Activated CD8-positive, alpha-beta T cell treated with anti-CD3 and anti-CD28 coated beads for 36 hours (primary cell): ENCODE measurements at regions of chr20 and their contacts with region 1.

Region 1: GRCh38 chr20:49484180-49485140 is 2.0 kb upstream of the KCNB1 start:
- DNase-seq: peak; percentile 79
- ATAC-seq: peak; percentile 88
- H3K4me3 Mint-ChIP-seq: peak overlapping the region; percentile 71
- H3K27ac Mint-ChIP-seq: no peak overlapping the region
- H3K4me1 Mint-ChIP-seq: peaks cover 5% of the 10 kb centered on the region
- H3K27me3 Mint-ChIP-seq: peaks cover 63% of the 10 kb centered on the region
- CTCF ChIP-seq: peak; percentile 77

Region 2: DNA sequence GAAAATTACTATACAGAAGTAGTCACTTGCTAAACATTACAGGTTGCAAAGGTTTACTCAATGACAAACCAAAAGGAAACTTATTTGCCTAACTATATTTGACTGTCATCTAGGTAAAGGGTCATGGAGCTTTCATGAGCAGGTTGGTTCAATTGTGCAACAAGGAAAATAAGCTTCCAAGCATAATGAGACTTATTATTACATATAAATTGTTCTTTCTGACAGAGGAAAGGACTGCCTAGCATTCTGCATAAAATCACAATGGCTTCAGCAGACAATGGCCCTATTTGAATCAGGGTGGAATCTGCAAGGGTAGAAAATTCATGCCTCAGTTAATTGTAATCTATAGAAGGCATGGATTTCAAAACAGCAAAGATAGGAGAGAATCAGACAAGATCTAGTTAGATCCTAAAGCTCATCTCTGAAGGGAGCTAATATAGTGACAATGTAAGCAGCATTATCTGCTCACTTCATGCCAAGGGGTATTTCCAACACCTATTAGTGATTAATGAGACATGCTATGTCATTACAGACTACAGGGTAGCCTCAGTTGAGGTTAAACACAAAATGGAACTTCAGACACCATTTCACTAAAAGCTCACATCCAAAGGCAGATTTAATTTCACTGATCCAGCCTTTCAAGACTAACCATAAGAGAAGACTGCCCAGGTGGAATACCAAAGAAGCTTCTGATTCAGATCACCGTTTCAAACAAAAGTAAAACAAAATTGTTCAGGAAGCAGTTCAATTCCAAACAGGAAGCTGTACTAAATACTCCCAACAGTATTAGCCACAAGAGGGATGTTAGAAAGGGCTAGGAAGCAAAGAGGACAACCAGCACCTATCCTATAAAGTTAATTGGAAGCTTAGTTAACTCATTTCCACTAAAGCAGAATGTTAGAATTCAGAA is 304.8 kb before region 1 on chr20:
- CTCF ChIA-PET with region 1: no interaction called
- POLR2A ChIA-PET with region 1: no interaction called
- intact Hi-C with region 1: no loop called
- DNase-seq: no peak
- ATAC-seq: no peak
- H3K4me3 Mint-ChIP-seq: no peak overlapping the region
- H3K27ac Mint-ChIP-seq: peak overlapping the region; percentile 43
- H3K4me1 Mint-ChIP-seq: peaks cover 53% of the 10 kb centered on the region
- H3K27me3 Mint-ChIP-seq: no peaks in the 10 kb centered on the region
- CTCF ChIP-seq: no peak

Region 3: GRCh38 chr20:49320444-49320843 is 164.0 kb before region 1 on chr20:
- CTCF ChIA-PET with region 1: interaction called, 11 read pairs
- POLR2A ChIA-PET with region 1: no interaction called
- intact Hi-C with region 1: no loop called
- DNase-seq: no peak
- ATAC-seq: no peak
- H3K4me3 Mint-ChIP-seq: no peak overlapping the region
- H3K27ac Mint-ChIP-seq: no peak overlapping the region
- H3K4me1 Mint-ChIP-seq: peaks cover 31% of the 10 kb centered on the region
- H3K27me3 Mint-ChIP-seq: peaks cover 51% of the 10 kb centered on the region
- CTCF ChIP-seq: no peak

Region 4: GRCh38 chr20:49338061-49338460 is 146.4 kb before region 1 on chr20:
- CTCF ChIA-PET with region 1: interaction called, 32 read pairs
- POLR2A ChIA-PET with region 1: no interaction called
- intact Hi-C with region 1: loop called (anchors 10 kb)
- DNase-seq: no peak
- ATAC-seq: no peak
- H3K4me3 Mint-ChIP-seq: no peak overlapping the region
- H3K27ac Mint-ChIP-seq: no peak overlapping the region
- H3K4me1 Mint-ChIP-seq: no peaks in the 10 kb centered on the region
- H3K27me3 Mint-ChIP-seq: peaks cover 5% of the 10 kb centered on the region
- CTCF ChIP-seq: no peak

Region 5: DNA sequence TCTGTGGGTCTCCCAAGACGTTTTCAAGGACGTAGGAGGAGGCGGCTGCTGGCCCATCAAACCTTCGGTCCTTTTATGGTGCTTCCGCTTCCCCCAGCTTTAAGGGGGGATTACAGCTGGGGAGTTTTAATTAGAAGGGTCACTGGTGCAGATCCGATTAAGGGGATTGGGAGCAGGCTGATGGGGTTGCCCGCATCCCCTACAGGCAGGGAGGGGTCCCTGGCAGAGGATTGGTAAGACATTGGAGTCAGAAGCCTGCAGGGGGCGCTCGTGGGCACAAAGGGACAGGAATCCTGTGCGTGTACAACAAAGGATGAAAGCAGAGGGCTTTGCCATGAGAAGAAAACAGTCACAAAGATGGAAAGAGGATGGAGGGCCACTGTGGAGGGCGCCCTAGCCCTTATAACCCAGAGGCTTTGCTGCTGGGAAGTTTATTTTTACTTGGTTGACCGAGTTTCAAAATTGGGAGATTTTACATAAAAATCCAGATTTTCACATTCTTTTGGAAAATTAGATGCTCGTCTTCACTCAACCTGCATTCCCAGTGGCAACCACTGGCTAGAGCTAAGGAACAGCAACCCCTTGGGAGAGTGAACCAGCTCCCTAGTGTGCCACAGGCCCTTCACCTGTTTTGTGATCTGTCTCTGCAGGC is 99.9 kb before region 1 on chr20:
- CTCF ChIA-PET with region 1: interaction called, 18 read pairs
- POLR2A ChIA-PET with region 1: interaction called, 4 read pairs
- intact Hi-C with region 1: loop called (anchors 10 kb)
- DNase-seq: peak; percentile 84
- ATAC-seq: peak; percentile 62
- H3K4me3 Mint-ChIP-seq: no peak overlapping the region
- H3K27ac Mint-ChIP-seq: no peak overlapping the region
- H3K4me1 Mint-ChIP-seq: no peaks in the 10 kb centered on the region
- H3K27me3 Mint-ChIP-seq: peaks cover 21% of the 10 kb centered on the region
- CTCF ChIP-seq: peak; percentile 81

Region 6: GRCh38 chr20:49466114-49466912 is 18.1 kb before region 1 on chr20:
- CTCF ChIA-PET with region 1: interaction called, 14 read pairs
- POLR2A ChIA-PET with region 1: interaction called, 3 read pairs
- intact Hi-C with region 1: no loop called
- DNase-seq: no peak
- ATAC-seq: no peak
- H3K4me3 Mint-ChIP-seq: no peak overlapping the region
- H3K27ac Mint-ChIP-seq: no peak overlapping the region
- H3K4me1 Mint-ChIP-seq: no peaks in the 10 kb centered on the region
- H3K27me3 Mint-ChIP-seq: peaks cover 15% of the 10 kb centered on the region
- CTCF ChIP-seq: no peak

Region 7: GRCh38 chr20:49471397-49471796 is 13.1 kb before region 1 on chr20:
- CTCF ChIA-PET with region 1: interaction called, 14 read pairs
- POLR2A ChIA-PET with region 1: no interaction called
- intact Hi-C with region 1: no loop called
- DNase-seq: no peak
- ATAC-seq: no peak
- H3K4me3 Mint-ChIP-seq: no peak overlapping the region
- H3K27ac Mint-ChIP-seq: no peak overlapping the region
- H3K4me1 Mint-ChIP-seq: no peaks in the 10 kb centered on the region
- H3K27me3 Mint-ChIP-seq: peaks cover 21% of the 10 kb centered on the region
- CTCF ChIP-seq: no peak

Region 8: DNA sequence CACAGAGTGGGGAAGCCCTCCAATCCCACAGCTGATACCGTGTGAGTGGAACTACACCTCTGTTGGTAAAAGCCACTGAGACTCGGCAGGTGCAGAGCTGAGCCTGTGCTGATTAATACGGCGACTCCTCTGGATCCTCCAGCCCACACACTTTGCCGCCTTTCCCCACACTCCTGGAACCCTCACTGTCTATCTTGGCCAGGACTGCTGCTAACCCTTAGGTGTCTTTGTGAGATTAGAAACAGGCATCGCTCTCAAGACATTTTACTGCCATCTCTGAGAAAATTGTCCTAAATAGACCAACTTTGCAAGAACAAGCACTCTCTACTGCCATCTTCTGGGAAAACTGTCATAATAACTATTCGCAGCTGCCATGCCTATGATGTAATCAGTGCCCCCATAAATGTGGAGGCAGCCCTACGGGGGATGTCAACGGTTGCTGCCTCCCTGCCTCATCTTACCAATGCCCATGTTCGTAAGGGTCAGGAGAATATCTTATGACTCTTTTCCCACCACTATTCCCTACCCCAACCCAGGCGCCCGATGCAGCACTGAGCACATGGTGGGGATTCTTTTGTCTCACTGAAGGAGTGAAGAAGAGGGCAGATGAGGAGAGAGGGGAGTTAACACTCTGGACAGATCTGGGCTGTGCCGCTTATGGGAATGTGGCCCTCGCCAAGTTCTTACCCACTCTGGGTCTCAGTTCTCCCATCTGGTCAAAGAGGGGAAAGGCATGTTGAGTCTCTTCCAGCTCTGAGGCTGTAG is 24.2 kb after region 1 on chr20:
- CTCF ChIA-PET with region 1: interaction called, 17 read pairs
- POLR2A ChIA-PET with region 1: no interaction called
- intact Hi-C with region 1: no loop called
- DNase-seq: peak; percentile 10
- ATAC-seq: peak; percentile 53
- H3K4me3 Mint-ChIP-seq: no peak overlapping the region
- H3K27ac Mint-ChIP-seq: no peak overlapping the region
- H3K4me1 Mint-ChIP-seq: no peaks in the 10 kb centered on the region
- H3K27me3 Mint-ChIP-seq: peaks cover 28% of the 10 kb centered on the region
- CTCF ChIP-seq: peak; percentile 60

Region 9: DNA sequence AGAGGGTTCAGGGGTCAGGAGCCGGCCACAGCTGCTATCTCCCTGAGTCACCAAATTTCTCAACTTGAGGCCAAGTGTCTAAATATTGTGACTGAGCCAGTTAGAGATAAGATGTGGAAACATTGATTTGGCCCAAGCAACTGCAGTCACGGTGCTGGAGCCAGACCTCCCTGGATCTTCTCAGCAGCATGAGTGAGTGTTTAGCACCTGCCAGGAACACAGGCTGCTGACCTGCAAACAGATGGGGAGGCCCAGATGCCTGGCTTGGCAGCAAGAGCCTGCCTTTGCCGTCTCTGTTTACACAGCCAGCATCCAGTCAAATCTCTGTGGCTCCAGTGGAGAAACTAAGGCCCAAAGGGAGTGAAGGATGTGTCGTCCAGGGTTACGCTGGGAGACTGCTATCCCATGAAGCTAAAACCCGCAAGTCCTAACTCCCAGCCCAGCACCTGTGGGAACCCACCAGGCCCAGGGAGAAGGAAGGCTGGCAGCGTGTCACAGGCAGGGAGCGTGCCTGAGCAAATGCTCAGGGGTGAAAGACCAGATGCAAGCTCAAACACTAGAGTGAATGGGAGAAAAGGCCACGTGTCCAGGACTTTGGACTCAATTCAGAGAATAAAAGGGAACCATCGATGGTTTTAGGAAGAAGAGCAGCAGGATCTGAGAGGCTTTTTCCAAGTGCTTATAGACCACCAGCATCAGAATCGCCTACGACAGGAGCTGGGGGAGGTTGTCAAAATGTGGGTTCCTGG is 99.4 kb after region 1 on chr20:
- CTCF ChIA-PET with region 1: no interaction called
- POLR2A ChIA-PET with region 1: no interaction called
- intact Hi-C with region 1: no loop called
- DNase-seq: no peak
- ATAC-seq: peak; percentile 52
- H3K4me3 Mint-ChIP-seq: no peak overlapping the region
- H3K27ac Mint-ChIP-seq: no peak overlapping the region
- H3K4me1 Mint-ChIP-seq: peaks cover 9% of the 10 kb centered on the region
- H3K27me3 Mint-ChIP-seq: peaks cover 22% of the 10 kb centered on the region
- CTCF ChIP-seq: no peak